Breast epithelium (tissue), 4 donors: ENCODE measurements at regions of chr12 and their contacts with region 1.

Region 1: DNA sequence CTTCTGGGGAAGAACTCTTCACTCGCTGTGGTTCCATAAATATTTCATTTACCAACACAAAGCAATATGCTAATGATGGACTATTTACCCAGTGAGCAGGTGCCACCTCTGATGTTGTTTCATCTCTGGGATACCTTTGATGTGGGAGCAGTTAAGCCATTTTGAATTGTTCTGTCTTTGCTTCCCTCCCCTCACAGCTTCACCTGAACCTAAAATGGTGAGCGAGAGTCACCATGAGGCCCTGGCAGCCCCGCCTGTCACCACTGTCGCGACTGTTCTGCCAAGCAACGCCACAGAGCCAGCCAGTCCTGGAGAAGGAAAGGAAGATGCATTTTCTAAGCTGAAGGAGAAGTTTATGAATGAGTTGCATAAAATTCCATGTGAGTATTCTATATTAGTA is 352.7 kb downstream of the SYT1 start:
- DNase-seq: no peak
- H3K4me3 ChIP-seq: no peak overlapping the region
- H3K27ac ChIP-seq: no peak overlapping the region
- H3K4me1 ChIP-seq: no peaks in the 10 kb centered on the region
- H3K27me3 ChIP-seq: no peaks in the 10 kb centered on the region
- CTCF ChIP-seq: no peak
- POLR2A ChIP-seq: no peak

Region 2: DNA sequence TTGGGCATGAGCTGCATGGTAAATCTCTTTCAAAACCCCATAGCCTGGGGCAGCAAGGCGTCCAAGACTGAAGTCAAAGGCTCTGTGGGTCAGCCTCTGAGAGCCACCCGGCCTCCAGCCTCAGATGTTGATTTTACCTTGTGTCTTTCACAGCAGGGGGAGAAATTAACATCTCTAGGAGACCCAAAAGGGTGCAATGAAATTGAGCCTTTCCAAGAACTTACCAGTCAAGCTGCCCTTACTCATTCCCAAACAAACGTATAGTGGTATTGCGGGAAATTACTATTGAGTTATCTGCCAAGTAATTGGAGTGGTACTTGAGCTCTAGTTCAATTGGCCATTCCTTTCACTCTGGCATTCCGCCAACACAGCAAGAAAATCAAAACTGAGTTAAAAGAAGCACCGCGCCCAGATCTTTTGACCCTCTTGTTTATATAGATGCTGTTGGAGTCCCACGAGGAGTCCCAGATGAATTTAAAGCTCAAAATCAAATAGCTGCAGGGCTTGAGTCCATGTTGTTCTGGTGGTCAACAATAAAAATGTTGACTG is 733.5 kb before region 1 on chr12:
- intact Hi-C with region 1: loop called (anchors 5 kb)
- DNase-seq: no peak
- H3K4me3 ChIP-seq: no peak overlapping the region
- H3K27ac ChIP-seq: no peak overlapping the region
- H3K4me1 ChIP-seq: no peaks in the 10 kb centered on the region
- H3K27me3 ChIP-seq: no peaks in the 10 kb centered on the region
- CTCF ChIP-seq: no peak
- POLR2A ChIP-seq: no peak

Region 3: GRCh38 chr12:79250186-79250585 is 32.9 kb after region 1 on chr12:
- intact Hi-C with region 1: no loop called
- DNase-seq: no peak
- H3K4me3 ChIP-seq: no peak overlapping the region
- H3K27ac ChIP-seq: no peak overlapping the region
- H3K4me1 ChIP-seq: no peaks in the 10 kb centered on the region
- H3K27me3 ChIP-seq: no peaks in the 10 kb centered on the region
- CTCF ChIP-seq: no peak
- POLR2A ChIP-seq: no peak